ENCODE measurements at regions of chr13 and their contacts with region 1.

Region 1: DNA sequence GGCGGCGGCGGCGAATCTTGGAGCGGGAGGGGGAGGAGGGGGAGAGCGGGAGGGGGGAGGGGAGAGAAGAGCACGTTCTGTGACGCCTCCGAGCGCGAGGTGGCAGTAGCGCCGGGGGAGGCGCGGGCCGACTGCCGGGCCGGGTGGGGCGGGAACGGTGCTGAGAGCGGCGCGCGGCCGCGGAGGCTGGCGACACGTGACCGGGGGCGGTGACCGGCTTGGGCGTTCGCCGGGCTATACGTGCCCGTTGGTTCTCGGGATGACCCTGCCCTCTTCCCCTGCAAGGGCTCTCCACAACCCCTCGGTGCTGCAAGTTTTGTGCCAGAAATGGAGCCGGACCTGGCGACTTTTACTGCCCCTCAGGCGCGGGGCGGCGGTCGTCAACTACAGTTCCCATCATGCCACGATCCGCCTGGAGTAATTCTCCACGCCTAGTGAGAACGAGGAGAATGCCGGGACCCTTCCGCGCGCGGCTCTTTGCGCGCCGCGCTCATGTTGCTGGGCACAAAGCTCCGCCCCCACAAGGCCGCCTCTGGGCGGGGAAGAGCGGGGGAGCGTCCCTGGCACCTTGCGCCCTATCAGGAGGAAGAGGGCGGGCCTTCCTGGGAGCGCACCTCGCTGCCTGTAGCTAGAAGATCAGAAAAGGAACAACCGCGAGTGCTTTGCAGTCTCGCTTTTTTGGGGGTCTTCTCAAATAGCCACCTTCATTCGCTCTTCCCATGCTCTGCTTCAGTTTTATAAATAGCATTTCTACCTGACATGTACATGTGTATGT is at the start of gene KPNA3:
- DNase-seq: peak; percentile 96
- H3K4me3 Mint-ChIP-seq: peak within 1 kb of the TSS; percentile 91
- H3K27ac Mint-ChIP-seq: peak within 1 kb of the TSS; percentile 93
- H3K4me1 Mint-ChIP-seq: peaks cover 27% of the 10 kb centered on the region
- H3K27me3 Mint-ChIP-seq: no peaks in the 10 kb centered on the region
- total RNA-seq, gene KPNA3: 42.0 to 44.0 TPM

Region 2: GRCh38 chr13:49690992-49691886 is 101.5 kb before region 1 on chr13 and contains the start of gene EBPL:
- CTCF ChIA-PET with region 1: interaction called, 4 read pairs
- POLR2A ChIA-PET with region 1: interaction called, 24 read pairs
- intact Hi-C with region 1: loop called (anchors 1 kb)
- DNase-seq: peak; percentile 94
- H3K4me3 Mint-ChIP-seq: peak within 1 kb of the TSS; percentile 83
- H3K27ac Mint-ChIP-seq: peak within 1 kb of the TSS; percentile 62
- H3K4me1 Mint-ChIP-seq: peaks cover 15% of the 10 kb centered on the region
- H3K27me3 Mint-ChIP-seq: no peaks in the 10 kb centered on the region
- total RNA-seq, gene EBPL: 36.1 to 36.2 TPM

Region 3: DNA sequence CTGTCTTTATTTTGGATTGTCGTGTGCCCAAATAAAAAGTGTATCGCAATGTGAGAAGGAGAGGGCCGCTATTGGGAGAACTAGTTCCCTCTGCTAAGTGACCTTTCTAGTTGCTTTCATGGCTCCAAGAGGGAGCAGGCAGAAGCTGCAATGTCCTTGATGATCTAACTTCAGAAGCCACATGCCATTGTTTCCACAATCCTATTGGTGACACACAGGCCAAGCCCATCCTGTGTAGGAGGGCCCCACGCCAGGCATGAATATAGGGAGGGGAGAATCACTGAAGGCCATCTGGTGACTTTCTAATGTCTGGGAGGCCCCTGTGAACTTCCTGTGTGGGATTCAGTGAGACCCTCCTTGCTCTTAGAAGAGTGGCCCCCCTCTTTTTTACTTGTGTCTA is 47.5 kb after region 1 on chr13:
- CTCF ChIA-PET with region 1: no interaction called
- POLR2A ChIA-PET with region 1: no interaction called
- intact Hi-C with region 1: loop called (anchors 5 kb)
- DNase-seq: no peak
- H3K4me3 Mint-ChIP-seq: no peak overlapping the region
- H3K27ac Mint-ChIP-seq: no peak overlapping the region
- H3K4me1 Mint-ChIP-seq: no peaks in the 10 kb centered on the region
- H3K27me3 Mint-ChIP-seq: no peaks in the 10 kb centered on the region

Region 4: GRCh38 chr13:49936085-49936940 is 143.6 kb after region 1 on chr13 and contains the start of gene SPRYD7:
- CTCF ChIA-PET with region 1: interaction called, 7 read pairs
- POLR2A ChIA-PET with region 1: interaction called, 14 read pairs
- intact Hi-C with region 1: loop called (anchors 1 kb)
- DNase-seq: peak; percentile 97
- H3K4me3 Mint-ChIP-seq: peak within 1 kb of the TSS; percentile 92
- H3K27ac Mint-ChIP-seq: peak within 1 kb of the TSS; percentile 77
- H3K4me1 Mint-ChIP-seq: peaks cover 12% of the 10 kb centered on the region
- H3K27me3 Mint-ChIP-seq: no peaks in the 10 kb centered on the region
- total RNA-seq, gene SPRYD7: 4.9 to 5.4 TPM